ENCODE measurements at regions of chr1 and their contacts with region 1.

Region 1: GRCh38 chr1:26999440-26999987 is 6.0 kb downstream of the TRNP1 start:
- DNase-seq: peak; percentile 96
- H3K4me3 ChIP-seq: no peak overlapping the region
- H3K27ac ChIP-seq: peak overlapping the region; percentile 91 to 98 (median 97)
- H3K4me1 ChIP-seq: peaks cover 0 to 97% (median 94%) of the 10 kb centered on the region in 4 donors
- H3K27me3 ChIP-seq: no peaks in the 10 kb centered on the region
- CTCF ChIP-seq: no peak
- EP300 ChIP-seq: peak in 3 of 4 donors; percentile 88 to 96 (median 92)
- POLR2A ChIP-seq: no peak

Region 2: DNA sequence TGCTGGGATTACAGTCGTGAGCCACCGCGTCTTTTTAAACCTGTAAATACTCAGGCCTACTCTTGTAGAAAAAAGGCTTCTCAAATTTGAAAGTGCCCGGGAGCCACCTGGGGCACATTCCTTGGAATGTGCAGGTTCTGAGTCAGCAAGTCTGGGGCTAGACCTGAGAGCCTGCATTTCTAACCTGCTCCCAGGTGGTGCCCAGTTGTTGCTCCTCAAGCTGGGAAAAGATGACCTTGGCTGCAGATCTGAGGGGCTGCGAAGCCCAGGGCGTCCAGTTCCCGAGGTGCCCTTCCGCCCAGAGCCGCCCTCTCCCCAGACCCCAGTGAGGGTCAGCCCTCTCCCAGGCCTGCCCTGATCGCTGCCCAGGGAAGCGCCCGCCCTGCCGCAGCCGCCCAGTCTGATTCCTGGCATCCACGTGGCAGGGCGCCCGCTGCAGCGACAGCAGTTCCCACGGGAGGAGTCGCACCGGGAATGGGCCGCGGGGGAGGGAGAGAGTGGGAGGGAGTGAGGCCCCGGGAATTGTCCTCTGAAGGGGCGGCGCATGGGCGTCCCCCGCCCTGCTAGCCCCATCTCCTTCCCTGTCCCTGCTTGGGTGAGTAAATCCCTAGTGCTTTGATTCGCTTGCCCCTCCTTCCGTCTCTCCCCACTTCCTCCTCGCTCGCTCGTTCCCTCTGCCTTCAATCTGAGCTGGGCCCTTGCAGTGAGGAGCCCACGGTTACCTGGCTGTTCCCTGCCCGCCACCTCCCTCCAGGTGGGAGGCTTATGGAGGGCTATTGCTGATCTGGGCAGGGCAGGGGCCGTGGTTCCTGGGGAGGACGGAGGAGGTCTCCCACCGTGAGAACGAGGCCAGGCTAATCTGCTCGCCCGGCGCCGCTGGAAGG is 32.0 kb after region 1 on chr1:
- intact Hi-C with region 1: loop called (anchors 2 kb)
- DNase-seq: peak; percentile 93
- H3K4me3 ChIP-seq: peak overlapping the region; percentile 2 to 48 (median 38)
- H3K27ac ChIP-seq: peak overlapping the region; percentile 77 to 83 (median 82)
- H3K4me1 ChIP-seq: peaks cover 0 to 27% (median 26%) of the 10 kb centered on the region in 4 donors
- H3K27me3 ChIP-seq: no peaks in the 10 kb centered on the region
- CTCF ChIP-seq: no peak
- EP300 ChIP-seq: peak in 1 of 4 donors; percentile 69
- POLR2A ChIP-seq: no peak

Region 3: GRCh38 chr1:27044613-27045151 is 45.2 kb after region 1 on chr1:
- intact Hi-C with region 1: loop called (anchors 1 kb)
- DNase-seq: peak; percentile 93
- H3K4me3 ChIP-seq: peak overlapping the region in 3 of 4 donors; percentile 2 to 24 (median 18)
- H3K27ac ChIP-seq: no peak overlapping the region
- H3K4me1 ChIP-seq: peaks cover 0 to 20% (median 13%) of the 10 kb centered on the region in 4 donors
- H3K27me3 ChIP-seq: no peaks in the 10 kb centered on the region
- CTCF ChIP-seq: peak; percentile 95 to 99 (median 97)
- EP300 ChIP-seq: no peak
- POLR2A ChIP-seq: no peak

Region 4: GRCh38 chr1:27097484-27097917 is 98.0 kb after region 1 on chr1:
- intact Hi-C with region 1: loop called (anchors 1 kb)
- DNase-seq: peak; percentile 92
- H3K4me3 ChIP-seq: no peak overlapping the region
- H3K27ac ChIP-seq: no peak overlapping the region
- H3K4me1 ChIP-seq: peaks cover 0 to 27% (median 23%) of the 10 kb centered on the region in 4 donors
- H3K27me3 ChIP-seq: no peaks in the 10 kb centered on the region
- CTCF ChIP-seq: peak; percentile 95 to 98 (median 96)
- EP300 ChIP-seq: no peak
- POLR2A ChIP-seq: no peak